ENCODE measurements at regions of chr12 and their contacts with region 1.

Region 1: DNA sequence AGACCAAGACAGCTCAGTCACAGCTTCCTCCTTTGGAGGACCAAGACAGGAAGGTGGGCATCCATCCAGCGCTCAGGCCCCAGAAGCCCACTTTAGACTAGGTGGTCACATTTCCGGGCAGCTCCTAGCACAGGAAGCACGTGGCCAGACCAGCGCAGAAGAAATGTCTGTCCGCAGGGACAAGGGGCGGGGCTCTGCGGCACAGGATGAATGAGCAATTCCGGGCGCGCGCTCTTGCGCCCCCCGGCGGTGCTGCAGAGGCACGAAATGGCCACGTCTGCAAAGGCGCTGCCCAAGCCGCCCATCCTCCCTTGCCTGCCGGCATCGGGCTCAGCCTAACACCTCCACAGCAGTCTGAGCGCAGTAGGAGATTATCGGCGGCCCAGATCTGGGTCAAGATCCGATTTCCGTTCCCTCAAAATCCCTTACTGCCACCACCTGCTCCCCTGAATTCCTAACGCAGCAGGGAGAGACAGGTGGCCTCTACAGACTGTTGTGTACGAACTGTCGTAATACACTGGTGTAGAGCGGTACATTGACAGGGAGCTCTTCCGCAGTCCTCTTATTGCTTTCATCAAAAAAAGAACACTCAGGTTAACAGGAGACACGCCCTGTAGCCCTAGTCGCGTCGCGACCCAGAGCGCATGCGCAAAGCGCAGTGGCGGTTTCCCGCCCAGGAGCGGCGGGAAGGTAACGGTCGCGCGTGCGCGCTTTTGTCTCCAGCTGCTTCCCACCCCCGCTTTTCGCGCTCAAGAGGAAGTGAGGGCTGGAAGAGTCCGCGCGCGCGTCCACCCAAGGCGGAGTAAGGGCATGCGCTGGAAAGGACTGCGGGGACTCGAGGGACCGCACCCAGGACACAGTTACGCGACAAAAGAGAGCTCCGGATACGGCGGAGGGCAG is 794 bp downstream of the TUBA1B start:
- DNase-seq: peak; percentile 91
- CTCF ChIP-seq: peak; percentile 95

Region 2: DNA sequence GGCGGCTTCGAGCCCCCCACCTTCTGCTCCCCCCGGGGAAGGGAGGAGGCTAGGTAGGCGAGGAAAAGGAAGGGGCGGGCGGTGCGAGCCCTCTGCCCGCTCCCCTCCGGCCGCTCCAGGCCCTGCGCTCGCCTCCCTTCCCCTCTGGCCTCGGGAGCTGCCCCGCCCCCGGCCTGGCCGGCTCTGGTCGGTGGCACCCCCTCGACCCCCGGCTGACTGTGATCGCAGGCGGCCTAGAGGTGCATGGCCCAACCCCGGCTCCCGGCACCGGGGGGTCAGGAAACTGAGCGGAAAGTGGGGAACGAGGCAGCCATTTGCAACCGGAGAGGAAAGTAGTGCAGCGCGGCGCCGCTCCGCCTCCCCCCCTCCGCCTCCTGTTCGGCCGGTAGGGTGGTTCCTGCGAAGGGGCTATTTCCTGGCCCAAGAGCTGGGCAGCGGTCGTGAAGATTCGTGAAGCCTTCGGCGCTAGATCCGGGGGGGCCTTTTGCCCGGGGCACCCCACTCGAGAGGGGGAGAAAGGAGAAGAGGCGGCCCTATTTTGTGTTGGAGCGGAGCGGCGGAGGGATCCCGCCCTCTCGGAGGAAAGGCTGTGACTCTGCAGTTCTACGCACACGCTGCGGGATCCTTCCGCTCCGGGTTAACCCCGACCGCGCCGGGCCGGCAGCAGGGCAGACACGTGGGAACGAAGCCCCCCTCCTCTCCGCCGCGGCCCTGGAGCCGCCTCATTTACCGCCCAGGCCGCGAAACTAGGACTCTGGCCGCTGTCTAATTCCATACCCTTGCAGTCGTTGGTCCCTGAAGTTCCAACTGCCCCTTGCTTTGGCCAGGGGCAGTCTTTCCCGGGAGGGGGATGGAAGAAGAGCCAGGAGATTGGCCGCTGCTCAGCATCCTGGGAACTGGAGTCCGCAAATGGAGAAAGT is 69.9 kb before region 1 on chr12 and contains the start of gene KMT2D:
- CTCF ChIA-PET with region 1: interaction called, 15 read pairs
- POLR2A ChIA-PET with region 1: interaction called, 3 read pairs
- DNase-seq: peak; percentile 92
- CTCF ChIP-seq: no peak

Region 3: GRCh38 chr12:49088190-49088931 is 42.0 kb before region 1 on chr12:
- CTCF ChIA-PET with region 1: interaction called, 70 read pairs
- POLR2A ChIA-PET with region 1: interaction called, 6 read pairs
- DNase-seq: peak; percentile 83
- CTCF ChIP-seq: peak; percentile 92

Region 4: GRCh38 chr12:49110464-49111155 is 19.8 kb before region 1 on chr12 and contains the start of gene LMBR1L:
- CTCF ChIA-PET with region 1: interaction called, 85 read pairs
- POLR2A ChIA-PET with region 1: interaction called, 33 read pairs
- DNase-seq: peak; percentile 99
- CTCF ChIP-seq: peak; percentile 9

Region 5: GRCh38 chr12:49188914-49189367 is 58.5 kb after region 1 on chr12 and contains the start of gene TUBA1A:
- CTCF ChIA-PET with region 1: interaction called, 3 read pairs
- POLR2A ChIA-PET with region 1: interaction called, 18 read pairs
- DNase-seq: peak; percentile 92
- CTCF ChIP-seq: no peak

Region 6: DNA sequence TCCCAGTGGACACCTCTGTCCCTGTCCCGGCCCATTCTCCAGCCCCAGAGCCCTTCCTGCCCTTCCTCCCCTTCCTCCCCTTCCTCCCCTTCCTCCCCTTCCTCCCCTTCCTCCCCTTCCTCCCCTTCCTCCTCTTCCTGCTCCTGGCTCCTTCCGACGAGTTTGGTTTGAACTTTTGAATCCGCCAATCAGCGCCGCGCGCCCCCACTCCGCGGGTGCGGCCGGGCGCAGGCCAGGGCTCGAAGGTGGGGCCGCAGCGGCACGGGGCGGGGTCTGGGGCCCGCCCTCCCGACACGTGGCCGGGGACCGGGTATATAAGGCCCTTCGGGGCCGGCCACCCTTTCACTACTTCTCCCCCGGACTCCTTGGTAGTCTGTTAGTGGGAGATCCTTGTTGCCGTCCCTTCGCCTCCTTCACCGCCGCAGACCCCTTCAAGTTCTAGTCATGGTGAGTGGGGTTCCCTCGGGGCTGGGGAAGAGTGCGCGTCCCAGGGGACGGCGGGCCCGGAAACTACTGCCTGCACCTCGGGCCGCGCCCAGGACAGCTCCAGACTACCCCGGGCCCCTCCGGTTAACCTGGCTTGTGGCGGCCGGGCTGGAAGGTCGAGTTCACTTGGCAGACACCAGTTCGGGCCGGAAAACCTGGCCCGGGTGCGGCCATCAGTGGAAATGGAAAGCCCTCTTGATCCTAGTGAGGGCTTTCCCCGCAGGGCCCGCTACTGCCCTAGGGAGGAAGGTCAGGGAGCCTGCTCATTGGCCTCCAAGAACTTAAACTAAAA is 134.5 kb after region 1 on chr12 and contains the start of gene TUBA1C:
- CTCF ChIA-PET with region 1: no interaction called
- POLR2A ChIA-PET with region 1: interaction called, 13 read pairs
- DNase-seq: peak; percentile 100
- CTCF ChIP-seq: no peak